GM10248 (cell line): ENCODE measurements at regions of chr2 and their contacts with region 1.

Region 1: DNA sequence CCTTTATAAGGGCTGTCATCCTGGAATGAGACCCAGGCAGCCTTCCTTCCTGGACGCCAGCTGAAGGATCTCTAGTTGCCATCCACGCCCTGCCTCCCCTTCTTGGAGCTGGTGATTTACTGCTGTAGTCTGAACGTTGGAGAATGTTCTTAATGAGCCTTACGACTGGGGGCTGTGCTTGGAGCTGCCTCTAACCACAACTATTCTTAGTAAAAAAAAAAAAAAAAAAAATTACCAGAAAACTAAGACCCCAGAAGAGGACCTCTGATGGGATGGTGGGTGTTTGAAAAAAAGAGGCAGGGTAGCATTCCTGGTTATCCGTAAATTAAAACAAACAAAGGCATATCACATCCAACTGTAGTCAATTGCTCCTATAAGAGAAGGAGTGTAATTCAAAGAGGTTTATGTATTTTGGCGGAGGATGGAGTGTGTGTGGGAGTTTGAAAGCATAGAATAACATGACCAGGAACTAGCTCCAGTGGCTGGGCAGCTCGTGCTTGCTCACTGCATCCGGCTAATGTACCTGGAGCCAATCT is 105.4 kb downstream of the QPCT start:
- DNase-seq: no peak
- CTCF ChIP-seq: no peak

Region 2: GRCh38 chr2:37436323-37436722 is 13.5 kb before region 1 on chr2:
- CTCF ChIA-PET with region 1: interaction called, 11 read pairs
- POLR2A ChIA-PET with region 1: no interaction called
- DNase-seq: no peak
- CTCF ChIP-seq: no peak